Endothelial cell of umbilical vein (primary cell): ENCODE measurements at regions of chr3 and their contacts with region 1.

Region 1: DNA sequence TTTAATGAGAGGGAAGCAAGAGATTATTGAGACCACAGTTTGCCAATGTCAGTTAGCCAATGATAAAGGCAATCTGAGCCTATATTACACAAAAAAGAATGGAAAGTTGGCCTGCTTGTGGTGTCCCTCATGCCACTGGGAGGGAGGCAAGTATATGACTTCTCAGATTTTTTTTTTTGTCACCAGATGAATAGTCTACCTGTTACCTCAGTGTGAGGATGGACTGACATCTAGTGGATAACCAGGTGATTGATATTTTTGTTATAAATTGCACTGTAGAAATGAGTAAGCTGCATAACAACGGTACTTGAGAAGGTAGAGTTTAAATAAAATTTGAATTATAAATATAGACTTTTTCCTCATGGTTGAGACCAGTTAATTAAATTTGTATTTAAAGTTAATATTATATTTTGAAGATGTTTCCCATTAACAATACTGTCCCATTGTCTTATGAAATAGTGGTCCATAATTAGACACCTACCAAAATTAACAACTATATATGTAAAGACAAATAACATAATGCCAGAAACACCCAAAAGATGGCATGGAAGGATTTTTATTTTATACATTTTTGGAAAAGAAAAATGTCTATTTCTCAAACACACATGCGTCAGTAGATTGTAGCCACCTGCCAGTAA is 237.8 kb upstream of the GADL1 start:
- DNase-seq: peak; percentile 63
- H3K4me3 ChIP-seq: no peak overlapping the region
- H3K27ac ChIP-seq: no peak overlapping the region
- H3K4me1 ChIP-seq: no peaks in the 10 kb centered on the region
- H3K27me3 ChIP-seq: no peaks in the 10 kb centered on the region
- CTCF ChIP-seq: peak; percentile 28 to 38
- POLR2A ChIP-seq: no peak

Region 2: GRCh38 chr3:30012941-30013543 is 1119.2 kb before region 1 on chr3:
- CTCF ChIA-PET with region 1: interaction called, 11 read pairs
- POLR2A ChIA-PET with region 1: no interaction called
- dilution Hi-C with region 1: no loop called
- intact Hi-C with region 1: no loop called
- DNase-seq: peak; percentile 76
- H3K4me3 ChIP-seq: no peak overlapping the region
- H3K27ac ChIP-seq: no peak overlapping the region
- H3K4me1 ChIP-seq: peaks cover 5% of the 10 kb centered on the region
- H3K27me3 ChIP-seq: no peaks in the 10 kb centered on the region
- CTCF ChIP-seq: peak; percentile 55 to 56
- POLR2A ChIP-seq: no peak

Region 3: DNA sequence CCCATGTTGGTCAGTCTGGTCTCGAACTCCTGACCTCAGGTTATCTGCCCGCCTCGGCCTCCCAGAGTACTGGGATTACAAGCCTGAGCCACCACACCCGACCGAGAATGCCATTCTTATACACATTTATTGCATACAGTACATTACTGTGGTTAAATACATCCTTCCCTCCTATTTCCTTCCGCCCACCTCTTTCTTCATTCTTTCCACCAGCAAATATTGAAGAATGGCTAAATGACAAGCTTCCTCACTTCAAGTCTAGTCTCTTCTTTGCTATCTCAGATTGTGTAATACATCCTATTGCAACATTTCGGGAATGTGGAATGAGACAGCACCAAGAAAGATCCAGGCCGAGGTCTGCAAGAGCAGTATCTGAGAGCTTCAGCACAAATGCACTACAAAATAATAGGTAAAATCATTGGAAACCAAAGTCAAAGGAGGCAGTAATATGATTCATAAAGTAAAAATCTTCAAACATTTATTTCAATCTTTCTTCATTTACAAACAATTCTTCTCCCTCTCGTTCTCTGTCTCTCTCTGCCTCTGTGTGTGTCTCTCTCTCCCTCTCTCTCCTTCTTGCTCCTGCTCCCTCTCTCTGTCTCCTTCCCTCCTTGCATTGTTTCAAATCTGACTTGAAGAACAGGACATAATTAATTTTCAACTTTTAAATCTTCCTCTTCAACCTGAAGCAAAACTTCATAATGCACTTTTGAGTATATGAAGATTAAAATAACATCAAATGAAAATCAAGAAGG is 620.5 kb before region 1 on chr3:
- CTCF ChIA-PET with region 1: no interaction called
- POLR2A ChIA-PET with region 1: no interaction called
- dilution Hi-C with region 1: no loop called
- intact Hi-C with region 1: no loop called
- DNase-seq: peak; percentile 64
- H3K4me3 ChIP-seq: no peak overlapping the region
- H3K27ac ChIP-seq: peak overlapping the region; percentile 72
- H3K4me1 ChIP-seq: peaks cover 49% of the 10 kb centered on the region
- H3K27me3 ChIP-seq: no peaks in the 10 kb centered on the region
- CTCF ChIP-seq: no peak
- POLR2A ChIP-seq: no peak

Region 4: GRCh38 chr3:30779686-30780287 is 352.5 kb before region 1 on chr3:
- CTCF ChIA-PET with region 1: interaction called, 22 read pairs
- POLR2A ChIA-PET with region 1: no interaction called
- dilution Hi-C with region 1: no loop called
- intact Hi-C with region 1: loop called (anchors 1 kb)
- DNase-seq: peak; percentile 26
- H3K4me3 ChIP-seq: no peak overlapping the region
- H3K27ac ChIP-seq: no peak overlapping the region
- H3K4me1 ChIP-seq: peaks cover 7% of the 10 kb centered on the region
- H3K27me3 ChIP-seq: peaks cover 8 to 32% of the 10 kb centered on the region in 2 experiments
- CTCF ChIP-seq: peak; percentile 25 to 32
- POLR2A ChIP-seq: no peak

Region 5: DNA sequence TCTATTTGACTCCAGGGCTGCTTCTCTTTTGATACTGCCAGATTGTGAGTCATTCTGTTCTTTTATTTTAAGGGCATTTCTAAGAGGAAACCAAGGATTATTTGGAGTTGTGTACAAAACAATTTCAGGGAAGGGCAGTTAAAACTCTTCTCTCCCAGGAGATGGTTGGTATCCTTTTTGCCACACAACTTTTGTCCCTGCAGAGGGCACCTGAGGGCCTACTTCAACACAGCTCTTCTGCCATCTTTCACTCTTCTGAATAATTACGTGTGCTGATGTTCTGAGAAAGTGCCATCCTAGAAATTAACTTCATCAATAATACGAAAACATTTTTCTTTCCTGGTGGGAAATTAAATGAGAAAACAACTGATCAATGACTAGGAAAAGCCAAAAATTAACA is 162.1 kb before region 1 on chr3:
- CTCF ChIA-PET with region 1: interaction called, 23 read pairs
- POLR2A ChIA-PET with region 1: no interaction called
- dilution Hi-C with region 1: no loop called
- intact Hi-C with region 1: loop called (anchors 1 kb)
- DNase-seq: peak; percentile 24
- H3K4me3 ChIP-seq: no peak overlapping the region
- H3K27ac ChIP-seq: no peak overlapping the region
- H3K4me1 ChIP-seq: no peaks in the 10 kb centered on the region
- H3K27me3 ChIP-seq: peaks cover 7 to 16% of the 10 kb centered on the region in 2 experiments
- CTCF ChIP-seq: peak in 1 of 2 donors; percentile 31
- POLR2A ChIP-seq: no peak

Region 6: GRCh38 chr3:31166249-31166885 is 34.1 kb after region 1 on chr3:
- CTCF ChIA-PET with region 1: interaction called, 12 read pairs
- POLR2A ChIA-PET with region 1: no interaction called
- dilution Hi-C with region 1: no loop called
- intact Hi-C with region 1: no loop called
- DNase-seq: peak; percentile 91
- H3K4me3 ChIP-seq: peak overlapping the region in 1 of 3 experiments; percentile 19
- H3K27ac ChIP-seq: peak overlapping the region; percentile 87
- H3K4me1 ChIP-seq: peaks cover 32% of the 10 kb centered on the region
- H3K27me3 ChIP-seq: no peaks in the 10 kb centered on the region
- CTCF ChIP-seq: no peak
- POLR2A ChIP-seq: peak; percentile 17